Activated B cell treated with CpG ODN at 0.5 μM for 24 hours (primary cell): ENCODE measurements at regions of chr11 and their contacts with region 1.

Region 1: DNA sequence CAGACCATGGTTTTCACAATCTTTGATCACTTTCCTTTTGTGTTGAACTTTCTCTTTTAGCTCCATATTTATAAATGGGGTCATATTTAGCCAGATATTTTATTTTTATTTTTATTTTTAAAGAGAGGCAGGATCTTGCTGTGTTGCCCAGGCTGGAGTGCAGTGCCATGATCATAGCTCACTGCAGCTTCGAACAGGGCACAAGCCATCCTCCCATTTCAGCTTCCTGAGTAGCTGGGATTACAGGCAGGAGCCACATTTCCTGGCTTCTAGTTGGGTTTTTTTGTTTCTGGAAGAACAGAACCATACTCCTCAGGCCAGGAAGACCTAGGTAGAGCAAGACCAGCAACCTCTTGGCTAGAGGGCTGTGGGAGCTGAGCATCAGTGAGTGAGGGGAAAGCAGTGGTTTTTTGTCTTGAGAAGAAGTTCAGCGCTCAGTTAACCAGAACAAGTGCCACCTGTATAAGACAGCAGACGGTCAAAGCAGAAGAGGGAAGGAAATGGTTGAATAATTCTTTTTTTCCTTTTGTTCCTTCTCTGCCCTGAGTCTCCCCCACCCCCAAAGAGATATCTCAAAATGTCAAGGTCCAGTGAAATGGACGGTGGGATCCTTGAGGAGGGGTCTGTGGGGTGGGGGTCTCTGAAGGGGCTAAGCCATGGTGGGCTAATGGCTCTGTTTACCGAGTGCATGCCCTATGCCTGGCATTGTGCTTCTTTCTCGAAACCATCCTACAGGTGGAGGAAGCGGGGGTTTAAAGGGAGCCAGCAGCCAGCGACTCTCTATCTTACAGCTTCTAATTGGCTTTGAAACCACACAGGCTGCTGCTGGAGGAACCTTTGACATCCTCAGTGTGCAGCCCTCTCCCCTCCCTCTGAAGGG is 63.0 kb downstream of the PTPRJ start:
- DNase-seq: no peak
- ATAC-seq: peak; percentile 73
- H3K4me3 Mint-ChIP-seq: peak overlapping the region; percentile 52
- H3K27ac Mint-ChIP-seq: peak overlapping the region; percentile 67
- H3K4me1 Mint-ChIP-seq: peaks cover 63% of the 10 kb centered on the region
- H3K27me3 Mint-ChIP-seq: no peaks in the 10 kb centered on the region
- CTCF ChIP-seq: no peak

Region 2: DNA sequence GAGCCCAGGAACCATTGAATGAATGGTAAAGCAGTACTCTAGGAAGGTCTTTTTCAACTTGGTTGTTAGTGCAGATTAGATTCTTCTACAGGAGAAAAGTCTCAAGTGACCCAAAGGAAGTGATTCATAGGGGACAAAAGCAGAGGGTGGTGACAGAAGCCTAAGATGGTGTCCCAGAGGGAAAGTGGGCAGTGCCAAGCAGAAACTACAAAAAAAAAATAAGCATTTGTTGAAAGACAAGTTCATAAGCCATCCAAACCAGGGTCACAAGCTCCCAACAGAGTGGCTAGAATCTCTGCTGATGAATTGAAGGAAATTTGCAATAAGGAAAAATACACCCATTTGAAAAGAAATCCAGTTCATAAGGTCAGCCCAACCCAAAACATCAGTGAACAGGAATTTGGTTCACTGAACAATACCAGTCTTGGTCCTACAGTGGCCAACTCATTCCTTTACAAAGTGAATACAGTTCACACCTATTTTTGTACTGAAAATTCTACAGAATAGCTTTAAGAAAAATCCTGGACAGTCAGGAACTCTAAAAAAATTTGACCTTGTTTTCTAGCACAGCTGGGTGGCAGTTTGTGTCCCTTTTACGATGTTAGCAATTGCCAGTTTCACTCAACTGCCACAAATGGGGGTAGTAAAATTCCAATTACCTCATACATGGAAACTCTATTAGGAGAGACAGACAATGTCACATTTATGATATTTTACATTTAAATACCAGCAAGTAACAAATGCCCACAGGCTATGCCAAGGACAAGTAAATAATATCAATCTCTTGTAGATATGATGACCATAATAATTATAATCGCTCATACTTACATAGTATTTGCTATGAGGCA is 173.6 kb before region 1 on chr11:
- CTCF ChIA-PET with region 1: no interaction called
- POLR2A ChIA-PET with region 1: no interaction called
- intact Hi-C with region 1: no loop called
- DNase-seq: no peak
- ATAC-seq: peak; percentile 25
- H3K4me3 Mint-ChIP-seq: no peak overlapping the region
- H3K27ac Mint-ChIP-seq: peak overlapping the region; percentile 5
- H3K4me1 Mint-ChIP-seq: peaks cover 41% of the 10 kb centered on the region
- H3K27me3 Mint-ChIP-seq: no peaks in the 10 kb centered on the region
- CTCF ChIP-seq: no peak

Region 3: DNA sequence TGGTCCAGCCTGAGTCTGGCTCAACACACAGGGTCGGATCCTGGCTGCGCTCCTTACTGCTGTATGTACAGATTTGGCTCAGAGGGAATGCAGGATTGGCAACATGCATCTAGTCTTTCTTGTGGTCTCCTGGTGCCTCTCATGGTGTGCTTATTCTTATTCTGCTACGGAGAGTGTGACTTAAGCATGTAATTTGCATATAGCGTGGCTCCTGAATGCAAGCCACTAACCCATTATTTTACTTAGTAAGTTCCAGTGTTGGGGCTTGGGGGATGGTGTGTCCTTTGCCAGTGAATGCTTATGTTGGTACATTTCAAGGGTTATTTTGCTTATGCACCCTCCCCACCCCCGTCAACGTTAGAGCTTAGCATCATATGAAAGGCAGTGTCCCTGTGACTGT is 11.7 kb before region 1 on chr11:
- CTCF ChIA-PET with region 1: interaction called, 3 read pairs
- POLR2A ChIA-PET with region 1: interaction called, 29 read pairs
- intact Hi-C with region 1: loop called (anchors 1 kb)
- DNase-seq: no peak
- ATAC-seq: peak; percentile 60
- H3K4me3 Mint-ChIP-seq: no peak overlapping the region
- H3K27ac Mint-ChIP-seq: peak overlapping the region; percentile 85
- H3K4me1 Mint-ChIP-seq: peaks cover 61% of the 10 kb centered on the region
- H3K27me3 Mint-ChIP-seq: no peaks in the 10 kb centered on the region
- CTCF ChIP-seq: no peak